Calu3 (cell line): ENCODE measurements at regions of chr5 and their contacts with region 1.

Region 1: DNA sequence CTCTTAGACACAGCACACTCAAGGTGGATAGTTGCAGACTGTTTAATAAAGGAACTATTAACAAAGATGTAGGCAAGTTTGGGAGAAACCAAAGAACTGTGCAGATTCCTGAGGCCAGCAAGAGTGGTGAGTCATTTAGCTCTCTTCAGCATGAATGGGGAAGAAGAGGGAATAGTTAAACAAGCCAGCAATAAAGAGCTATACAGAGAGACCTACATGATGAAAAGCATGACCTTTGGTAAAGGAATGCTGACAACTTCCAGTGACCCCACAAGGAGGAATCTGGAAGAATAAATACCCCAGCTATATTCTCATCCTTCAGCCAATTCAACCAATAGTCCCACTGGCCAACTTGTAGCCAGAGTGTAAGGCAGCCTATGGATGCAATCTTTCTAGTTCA is 706.0 kb upstream of the GRAMD2B start:
- DNase-seq: peak; percentile 26
- H3K4me3 Mint-ChIP-seq: no peak overlapping the region
- H3K27ac Mint-ChIP-seq: peak overlapping the region; percentile 38
- H3K4me1 Mint-ChIP-seq: peaks cover 25% of the 10 kb centered on the region
- H3K27me3 Mint-ChIP-seq: no peaks in the 10 kb centered on the region
- CTCF ChIP-seq: no peak

Region 2: DNA sequence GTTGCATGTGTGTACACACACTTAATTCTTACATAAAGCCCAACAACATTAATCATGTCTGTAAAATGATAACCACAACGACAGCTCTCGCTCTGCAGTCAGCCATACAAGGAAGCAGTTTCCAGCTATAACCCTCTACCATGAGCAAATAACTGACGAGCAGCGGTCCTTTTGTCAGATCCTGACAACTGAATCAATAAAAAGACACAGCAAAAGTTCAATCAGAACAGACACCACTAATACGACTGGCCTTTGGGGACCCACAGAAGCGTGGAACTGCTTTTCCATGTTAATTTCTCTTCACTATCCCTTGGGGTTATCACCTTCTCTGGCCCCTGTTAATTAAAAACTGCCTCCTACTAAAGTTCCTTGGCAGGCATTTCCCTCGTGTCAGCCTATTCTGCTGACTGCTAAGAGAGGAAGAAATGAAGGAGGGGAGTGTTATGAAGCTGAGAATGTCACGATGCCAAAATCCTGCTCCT is 16.8 kb before region 1 on chr5:
- CTCF ChIA-PET with region 1: interaction called, 4 read pairs
- intact Hi-C with region 1: loop called (anchors 2 kb)
- DNase-seq: peak; percentile 34
- H3K4me3 Mint-ChIP-seq: peak overlapping the region; percentile 64
- H3K27ac Mint-ChIP-seq: peak overlapping the region; percentile 82
- H3K4me1 Mint-ChIP-seq: peaks cover 20% of the 10 kb centered on the region
- H3K27me3 Mint-ChIP-seq: no peaks in the 10 kb centered on the region
- CTCF ChIP-seq: no peak